Panc1 (cell line): ENCODE measurements at regions of chr1 and their contacts with region 1.

Region 1: DNA sequence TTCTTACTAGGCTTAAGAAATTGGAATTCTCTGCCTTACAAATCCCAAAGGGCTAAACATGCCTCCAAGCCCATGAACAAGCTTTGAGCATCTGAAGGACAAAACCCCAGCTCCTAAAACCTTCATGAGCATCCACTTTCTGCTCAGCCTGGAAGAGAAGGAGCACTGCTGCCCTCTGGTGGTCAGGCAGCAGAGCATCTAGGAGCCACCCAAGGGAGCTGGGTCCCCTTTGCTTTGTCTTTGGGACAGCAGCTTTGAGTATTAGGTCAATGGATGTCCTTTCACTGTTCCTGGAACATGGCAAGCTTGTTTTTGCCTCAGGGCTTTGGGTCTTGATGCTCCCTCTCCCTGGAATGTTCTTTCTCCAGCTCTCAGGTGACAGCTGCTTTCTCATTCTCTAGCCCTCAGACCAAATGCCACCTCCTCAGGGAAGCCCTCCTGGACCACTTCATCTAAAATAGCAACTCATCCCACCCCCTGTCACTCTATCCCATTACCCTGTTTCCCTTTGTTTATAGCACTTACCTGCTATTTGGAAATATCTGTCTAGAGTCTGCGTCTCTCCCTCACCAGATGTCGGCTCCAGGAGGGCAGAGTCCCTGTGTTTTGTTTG is 25.7 kb downstream of the RAB7B start:
- DNase-seq: peak; percentile 71
- ATAC-seq: peak; percentile 96
- H3K4me3 ChIP-seq: no peak overlapping the region
- H3K27ac ChIP-seq: no peak overlapping the region
- H3K4me1 ChIP-seq: no peaks in the 10 kb centered on the region
- H3K27me3 ChIP-seq: no peaks in the 10 kb centered on the region; the same call in 1 of the 2 replicates
- CTCF ChIP-seq: peak; percentile 94

Region 2: GRCh38 chr1:205313563-205314308 is 663.8 kb before region 1 on chr1:
- CTCF ChIA-PET with region 1: no interaction called
- POLR2A ChIA-PET with region 1: no interaction called
- in situ Hi-C with region 1: no loop called
- intact Hi-C with region 1: no loop called
- DNase-seq: no peak
- ATAC-seq: no peak
- H3K4me3 ChIP-seq: peak overlapping the region in 1 of 2 experiments; percentile 24; a peak in 2 of 4 replicates
- H3K27ac ChIP-seq: peak overlapping the region; percentile 73
- H3K4me1 ChIP-seq: peaks cover 57% of the 10 kb centered on the region
- H3K27me3 ChIP-seq: no peaks in the 10 kb centered on the region
- CTCF ChIP-seq: no peak

Region 3: DNA sequence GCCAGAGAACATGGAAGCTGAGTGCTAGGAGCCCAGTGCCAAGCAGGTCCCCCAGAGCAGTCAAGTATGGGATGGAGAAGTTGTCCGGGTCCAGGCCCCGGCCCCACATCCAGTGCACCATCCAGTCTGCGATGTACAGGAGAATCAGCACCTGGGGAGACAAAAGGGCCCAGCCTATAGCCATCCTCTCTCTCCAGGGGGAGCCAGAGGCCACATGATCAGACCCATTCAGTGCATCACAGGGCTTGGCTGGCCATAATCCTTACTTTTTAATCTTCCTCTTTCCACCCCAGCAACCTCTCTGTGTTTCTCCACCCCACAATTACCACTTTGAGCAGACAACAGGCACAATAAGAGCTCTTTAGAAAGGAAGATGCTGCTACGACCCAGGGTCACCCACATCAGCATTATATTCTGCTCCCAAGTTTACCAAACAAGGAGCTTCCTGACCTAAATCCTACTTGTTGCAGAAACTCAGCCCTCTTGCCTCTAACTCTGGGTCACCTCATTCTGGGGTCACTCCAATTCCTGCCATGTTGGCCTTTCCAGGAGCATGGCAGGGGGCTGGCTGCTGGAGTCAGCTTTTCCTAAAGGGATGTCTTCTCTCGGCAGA is 185.8 kb before region 1 on chr1:
- CTCF ChIA-PET with region 1: interaction called, 36 read pairs
- POLR2A ChIA-PET with region 1: no interaction called
- in situ Hi-C with region 1: no loop called
- intact Hi-C with region 1: loop called (anchors 1 kb)
- DNase-seq: peak; percentile 46
- ATAC-seq: peak; percentile 97
- H3K4me3 ChIP-seq: no peak overlapping the region
- H3K27ac ChIP-seq: no peak overlapping the region
- H3K4me1 ChIP-seq: no peaks in the 10 kb centered on the region; the same call in 1 of the 2 replicates
- H3K27me3 ChIP-seq: no peaks in the 10 kb centered on the region
- CTCF ChIP-seq: peak; percentile 90

Region 4: DNA sequence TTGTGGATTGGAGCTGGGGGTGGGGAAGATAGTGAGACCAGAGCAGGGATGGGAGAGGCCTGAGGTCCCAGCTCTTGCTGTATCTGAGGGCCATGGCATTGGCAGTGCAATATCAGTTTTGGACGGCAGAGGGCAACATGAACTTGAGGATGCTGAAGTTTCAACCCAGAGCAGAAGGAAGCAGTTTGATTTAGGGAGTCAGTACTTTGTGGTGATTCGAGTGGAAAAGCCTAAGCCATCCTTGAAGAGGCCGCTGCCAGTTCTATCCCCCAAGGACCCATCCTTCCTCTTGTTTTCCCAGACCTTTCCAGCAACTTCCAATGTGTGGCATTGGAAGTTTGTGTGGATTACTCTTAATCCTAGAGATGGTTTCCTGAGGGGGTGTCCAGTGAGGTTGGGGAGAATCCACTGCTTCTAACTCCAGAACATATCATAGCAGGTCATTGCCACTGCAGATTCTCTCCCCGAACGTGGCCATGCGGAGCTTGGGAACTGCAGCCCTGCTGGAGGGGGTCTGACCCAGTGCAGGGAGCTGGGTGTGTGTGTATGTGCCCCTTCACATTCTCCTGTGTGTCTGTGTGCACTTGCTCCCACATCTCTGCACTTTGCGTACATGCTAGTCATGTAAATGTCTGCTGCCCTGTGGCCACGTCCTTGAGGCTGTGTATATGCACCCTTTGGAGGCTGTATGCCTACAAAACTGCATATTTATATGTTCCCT is 58.3 kb before region 1 on chr1:
- CTCF ChIA-PET with region 1: interaction called, 116 read pairs
- POLR2A ChIA-PET with region 1: interaction called, 4 read pairs
- in situ Hi-C with region 1: no loop called
- intact Hi-C with region 1: loop called (anchors 1 kb)
- DNase-seq: peak; percentile 69
- ATAC-seq: peak; percentile 94
- H3K4me3 ChIP-seq: no peak overlapping the region
- H3K27ac ChIP-seq: no peak overlapping the region
- H3K4me1 ChIP-seq: peaks cover 5% of the 10 kb centered on the region; the same call in 1 of the 2 replicates
- H3K27me3 ChIP-seq: no peaks in the 10 kb centered on the region
- CTCF ChIP-seq: peak; percentile 88

Region 5: DNA sequence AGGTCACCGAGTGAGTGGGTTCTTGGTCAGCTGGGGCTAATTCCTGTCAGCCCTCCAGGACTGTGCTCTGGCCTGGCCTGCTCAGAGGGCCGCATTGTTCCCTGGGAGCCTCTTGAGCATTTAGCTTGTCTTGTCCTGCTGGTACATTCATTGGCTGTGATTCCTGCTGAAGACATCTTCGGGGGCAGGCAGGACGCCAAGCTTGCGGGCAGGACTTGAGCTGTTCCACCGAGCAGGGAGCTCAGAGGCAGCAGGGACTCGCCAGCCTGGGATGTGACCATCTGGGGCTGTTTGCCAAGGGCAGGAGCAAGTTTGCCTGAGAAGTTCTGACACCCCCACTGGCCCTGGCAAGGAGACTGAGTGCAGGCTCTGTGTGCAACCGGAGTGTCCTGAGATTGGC is 27.2 kb before region 1 on chr1:
- CTCF ChIA-PET with region 1: interaction called, 10 read pairs
- POLR2A ChIA-PET with region 1: no interaction called
- in situ Hi-C with region 1: no loop called
- intact Hi-C with region 1: no loop called
- DNase-seq: no peak
- ATAC-seq: no peak; the same call in 1 of the 2 replicates
- H3K4me3 ChIP-seq: no peak overlapping the region
- H3K27ac ChIP-seq: no peak overlapping the region
- H3K4me1 ChIP-seq: no peaks in the 10 kb centered on the region
- H3K27me3 ChIP-seq: peaks cover 13% of the 10 kb centered on the region
- CTCF ChIP-seq: no peak